Cardiac septum (tissue), 1 donor: ENCODE measurements at regions of chr16 and their contacts with region 1.

Region 1: GRCh38 chr16:55543472-55543871 is 23.0 kb upstream of the CAPNS2 start:
- DNase-seq: no peak

Region 2: DNA sequence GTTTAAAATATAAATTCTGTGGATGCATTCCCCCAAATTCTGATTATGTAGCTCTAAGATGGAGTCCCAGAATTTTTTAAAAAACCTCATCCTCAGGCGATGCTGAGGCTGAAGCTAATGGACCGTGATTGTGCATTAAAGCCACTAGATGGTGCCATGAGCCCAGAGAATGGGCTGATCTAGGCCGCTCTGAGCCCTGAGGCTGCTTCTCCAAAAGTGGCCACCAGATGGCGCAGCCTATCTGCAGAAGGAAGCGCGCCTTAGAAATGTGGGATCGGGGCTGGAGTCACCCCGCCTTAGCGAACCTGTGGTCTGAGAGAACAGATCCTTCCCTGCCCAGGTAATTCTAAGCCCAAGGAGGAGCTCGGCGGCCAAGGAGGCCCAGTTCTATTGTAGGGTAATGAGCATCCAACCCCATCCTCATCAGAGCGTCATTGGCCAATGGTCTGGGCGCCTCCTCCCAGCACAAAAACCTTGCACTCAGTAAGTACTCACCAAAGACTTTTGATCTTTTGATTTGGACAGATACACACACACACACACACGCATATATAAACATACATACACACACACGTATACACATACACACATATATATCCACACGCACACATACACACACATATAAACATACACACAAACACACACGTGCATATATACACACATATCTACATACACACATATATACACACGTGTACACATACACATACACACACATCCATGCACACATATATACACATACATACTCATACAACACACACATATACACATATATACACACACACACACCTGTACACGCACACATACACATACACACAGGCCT is 78.2 kb before region 1 on chr16:
- intact Hi-C with region 1: loop called (anchors 1 kb)
- DNase-seq: peak; percentile 93

Region 3: GRCh38 chr16:55471448-55472097 is 71.9 kb before region 1 on chr16:
- intact Hi-C with region 1: loop called (anchors 2 kb)
- DNase-seq: no peak

Region 4: DNA sequence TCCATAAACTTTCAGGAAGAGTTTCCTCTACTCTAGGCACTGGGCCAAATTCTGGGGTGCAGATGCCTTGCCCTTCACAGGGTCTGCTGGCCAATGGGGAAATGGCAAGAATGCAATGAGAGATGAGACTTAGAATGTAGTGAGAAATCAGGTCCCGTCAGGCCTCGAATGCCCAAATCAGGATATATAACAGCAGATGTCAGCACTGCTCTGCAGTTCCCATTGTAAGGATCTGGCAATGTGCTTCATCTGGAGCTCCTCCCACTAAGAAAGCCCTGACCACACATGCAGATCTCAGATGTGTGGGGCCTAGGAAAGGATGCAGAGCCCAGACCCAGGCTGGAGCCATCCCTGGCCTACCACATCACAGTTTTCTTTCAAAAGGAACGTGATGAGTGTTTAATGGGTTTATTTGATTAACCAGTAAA is 48.5 kb before region 1 on chr16:
- intact Hi-C with region 1: loop called (anchors 5 kb)
- DNase-seq: no peak

Region 5: DNA sequence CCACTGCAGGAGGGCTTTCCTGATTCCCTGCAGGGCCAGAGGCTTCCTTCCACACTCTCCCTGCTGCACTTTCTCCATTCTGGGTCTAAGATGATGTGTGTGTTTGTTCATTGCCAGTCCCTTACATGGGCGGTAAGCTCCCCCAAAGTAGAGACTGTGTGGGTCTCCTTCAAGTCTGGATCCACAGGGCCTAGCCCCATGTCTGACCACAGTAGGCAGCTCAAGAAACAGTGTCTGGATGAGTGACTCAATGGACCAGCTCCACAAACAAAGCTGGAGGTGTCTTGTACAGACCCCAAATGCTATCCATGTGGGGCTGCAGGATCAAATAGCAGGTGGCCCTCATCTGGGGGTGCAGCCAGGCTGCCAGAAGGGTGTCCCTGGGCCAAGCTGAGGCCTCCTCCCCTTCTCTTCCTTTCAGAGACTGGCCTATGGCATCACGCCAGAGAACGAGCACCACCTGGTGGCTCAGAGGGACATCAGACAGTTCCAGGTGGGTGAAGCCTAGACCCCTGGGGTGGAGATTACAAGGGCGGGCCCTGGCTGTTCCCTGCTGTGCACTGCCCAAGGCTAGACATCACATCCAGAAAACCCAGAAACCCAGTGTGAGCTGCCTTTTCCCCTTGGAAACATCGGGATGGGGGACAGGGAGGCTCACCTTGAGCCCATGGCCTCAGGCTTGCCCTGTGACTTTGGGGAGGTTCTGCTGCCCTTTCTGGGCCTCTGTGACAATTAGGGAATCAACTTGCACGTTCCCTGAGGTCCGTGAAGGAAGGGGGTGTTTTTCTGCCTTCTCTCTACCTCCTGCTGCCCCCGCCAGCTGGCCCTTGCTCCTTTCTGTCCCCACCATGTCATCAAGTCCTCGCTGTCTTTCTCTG is 158.2 kb after region 1 on chr16:
- intact Hi-C with region 1: loop called (anchors 5 kb)
- DNase-seq: no peak